ENCODE measurements at regions of chr6 and their contacts with region 1.

Region 1: GRCh38 chr6:169075211-169075914 is 178.3 kb downstream of the THBS2 start:
- DNase-seq: peak; percentile 85
- H3K4me3 ChIP-seq: peak overlapping the region; percentile 21
- H3K27ac ChIP-seq: peak overlapping the region; percentile 85
- H3K27me3 ChIP-seq: no peaks in the 10 kb centered on the region
- CTCF ChIP-seq: no peak

Region 2: GRCh38 chr6:169087443-169088041 is 12.2 kb after region 1 on chr6:
- CTCF ChIA-PET with region 1: no interaction called
- POLR2A ChIA-PET with region 1: interaction called, 16 read pairs
- DNase-seq: no peak
- H3K4me3 ChIP-seq: no peak overlapping the region
- H3K27ac ChIP-seq: peak overlapping the region; percentile 59
- H3K27me3 ChIP-seq: no peaks in the 10 kb centered on the region
- CTCF ChIP-seq: no peak

Region 3: GRCh38 chr6:169097381-169097959 is 22.1 kb after region 1 on chr6:
- CTCF ChIA-PET with region 1: interaction called, 3 read pairs
- POLR2A ChIA-PET with region 1: interaction called, 10 read pairs
- DNase-seq: peak; percentile 94
- H3K4me3 ChIP-seq: no peak overlapping the region
- H3K27ac ChIP-seq: peak overlapping the region; percentile 95
- H3K27me3 ChIP-seq: no peaks in the 10 kb centered on the region
- CTCF ChIP-seq: no peak